GM13977 (cell line): ENCODE measurements at regions of chr7 and their contacts with region 1.

Region 1: GRCh38 chr7:43454936-43455518 is 127.9 kb upstream of the STK17A start:
- DNase-seq: peak; percentile 65
- CTCF ChIP-seq: peak; percentile 52

Region 2: DNA sequence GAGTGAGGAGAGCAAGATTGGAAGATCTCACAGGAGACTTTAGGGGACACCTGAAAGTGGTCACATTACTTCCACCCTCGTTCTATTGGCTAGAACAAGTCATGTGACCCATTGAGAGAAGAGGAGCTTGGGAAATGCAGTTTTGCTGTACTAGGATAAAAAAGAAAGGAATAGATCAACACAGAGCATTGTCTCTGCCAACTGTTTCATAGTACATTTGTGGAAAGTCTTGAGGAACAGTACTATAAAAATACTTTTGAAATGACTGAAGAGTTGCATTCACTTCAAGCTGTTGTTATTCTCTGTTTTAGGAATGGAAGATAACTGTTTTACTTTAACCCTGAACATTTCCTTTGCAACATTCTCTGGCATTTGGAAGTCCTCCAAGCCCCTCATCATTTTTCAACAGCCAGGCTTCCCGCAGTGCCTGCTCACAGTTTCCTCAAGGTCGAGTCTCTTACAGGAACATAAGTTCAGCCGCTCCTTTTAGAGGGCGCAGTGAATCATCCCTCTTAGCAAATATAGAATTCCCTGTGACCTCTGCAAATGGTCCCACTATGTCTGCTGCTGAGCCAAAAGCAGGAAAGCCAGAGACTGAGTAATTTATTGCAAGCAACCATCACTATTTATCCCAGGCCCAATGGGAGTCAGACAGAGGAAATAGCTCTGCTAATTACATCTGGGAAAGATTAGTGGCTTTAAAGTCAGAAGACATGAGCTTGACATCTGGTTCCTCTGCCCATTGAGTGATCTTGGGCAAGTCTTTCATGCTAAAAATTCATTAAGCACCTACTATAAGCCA is 482.1 kb before region 1 on chr7:
- in situ Hi-C with region 1: no loop called
- DNase-seq: no peak
- CTCF ChIP-seq: no peak

Region 3: GRCh38 chr7:43834463-43835251 is 379.6 kb after region 1 on chr7:
- in situ Hi-C with region 1: loop called (anchors 25 kb)
- DNase-seq: no peak
- CTCF ChIP-seq: no peak